ENCODE measurements at regions of chr17 and their contacts with region 1.

Region 1: DNA sequence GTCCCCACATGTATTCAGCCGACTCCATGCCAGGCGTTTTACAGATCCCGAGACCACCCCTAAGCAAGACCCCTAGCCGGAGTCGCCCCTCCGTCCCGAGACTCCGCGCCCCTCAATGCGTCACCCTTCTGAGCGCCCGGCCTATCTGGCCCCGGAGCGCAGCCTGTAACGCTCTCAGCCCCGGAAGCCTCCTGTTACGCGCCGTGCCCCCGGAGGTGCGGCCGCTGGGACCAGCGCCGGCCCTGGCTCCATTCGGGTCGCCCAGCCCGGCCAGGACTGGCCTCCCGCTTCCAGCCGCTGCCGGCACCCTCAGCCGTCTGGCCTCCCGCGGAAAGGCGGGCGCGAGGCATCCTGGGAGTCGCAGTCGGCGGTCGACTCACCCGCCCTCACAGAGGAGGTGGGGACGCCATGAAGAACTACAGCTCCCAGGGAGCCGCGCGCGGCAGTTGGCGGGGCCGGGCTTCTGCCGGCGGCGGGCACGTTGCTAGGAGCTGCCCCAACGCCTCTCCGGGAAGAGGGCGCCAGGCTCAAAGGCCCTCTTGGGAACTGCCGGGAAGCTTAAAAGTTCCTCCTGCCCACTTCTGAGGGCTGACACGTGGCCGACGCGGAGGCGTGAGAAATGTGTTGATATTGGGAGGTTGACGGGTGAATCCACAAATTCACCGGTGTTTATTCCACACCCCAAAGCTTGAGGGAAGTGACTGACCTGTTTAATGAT is at the start of gene FBF1:
- H3K4me3 ChIP-seq: peak within 1 kb of the TSS; percentile 92
- H3K27ac ChIP-seq: peak within 1 kb of the TSS; percentile 85
- H3K4me1 ChIP-seq: peaks cover 3% of the 10 kb centered on the region; the same call in 1 of the 2 replicates
- CTCF ChIP-seq: peak; percentile 52; the same call in 1 of the 2 replicates

Region 2: DNA sequence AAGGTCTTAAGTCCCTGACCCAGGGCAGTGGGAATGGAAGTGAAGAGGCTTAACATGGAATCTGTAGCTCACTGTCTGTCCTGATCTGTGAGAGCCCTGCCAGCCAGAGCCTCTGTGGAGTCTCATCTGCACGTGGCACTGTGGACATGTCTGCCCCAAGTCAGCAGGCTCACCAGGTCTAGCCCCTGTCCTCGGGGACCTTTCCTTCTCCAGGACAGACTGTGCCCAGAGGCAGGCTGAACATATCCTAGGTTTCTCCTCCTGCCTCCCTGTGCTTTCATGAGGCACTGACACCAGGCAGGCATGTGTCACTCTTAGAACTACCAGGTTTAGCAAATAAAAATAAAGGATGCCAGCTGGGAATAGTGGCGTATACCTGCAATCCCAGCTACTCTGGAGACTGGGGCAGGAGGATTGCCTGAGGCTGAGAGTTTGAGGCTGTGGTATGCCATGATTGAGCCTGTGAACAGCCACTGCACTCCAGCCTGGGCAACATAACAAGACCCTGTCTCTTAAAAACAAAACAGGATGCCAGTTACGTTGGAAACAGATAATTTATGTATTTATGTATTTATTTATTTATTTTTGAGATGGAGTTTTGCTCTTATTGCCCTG is 133.9 kb before region 1 on chr17:
- CTCF ChIA-PET with region 1: no interaction called
- POLR2A ChIA-PET with region 1: no interaction called
- H3K4me3 ChIP-seq: no peak overlapping the region
- H3K27ac ChIP-seq: peak overlapping the region; percentile 46; the same call in 1 of the 2 replicates
- H3K4me1 ChIP-seq: peaks cover 9% of the 10 kb centered on the region
- CTCF ChIP-seq: no peak

Region 3: GRCh38 chr17:75904749-75905521 is 35.9 kb before region 1 on chr17 and contains the start of gene MRPL38:
- CTCF ChIA-PET with region 1: no interaction called
- POLR2A ChIA-PET with region 1: interaction called, 10 read pairs
- H3K4me3 ChIP-seq: peak within 1 kb of the TSS; percentile 92
- H3K27ac ChIP-seq: peak within 1 kb of the TSS; percentile 87
- H3K4me1 ChIP-seq: peaks cover 8% of the 10 kb centered on the region
- CTCF ChIP-seq: peak; percentile 99

Region 4: GRCh38 chr17:75927286-75927922 is 13.5 kb before region 1 on chr17:
- CTCF ChIA-PET with region 1: interaction called, 15 read pairs
- POLR2A ChIA-PET with region 1: interaction called, 20 read pairs
- H3K4me3 ChIP-seq: no peak overlapping the region
- H3K27ac ChIP-seq: no peak overlapping the region
- H3K4me1 ChIP-seq: no peaks in the 10 kb centered on the region
- CTCF ChIP-seq: peak; percentile 15; the same call in 1 of the 2 replicates

Region 5: DNA sequence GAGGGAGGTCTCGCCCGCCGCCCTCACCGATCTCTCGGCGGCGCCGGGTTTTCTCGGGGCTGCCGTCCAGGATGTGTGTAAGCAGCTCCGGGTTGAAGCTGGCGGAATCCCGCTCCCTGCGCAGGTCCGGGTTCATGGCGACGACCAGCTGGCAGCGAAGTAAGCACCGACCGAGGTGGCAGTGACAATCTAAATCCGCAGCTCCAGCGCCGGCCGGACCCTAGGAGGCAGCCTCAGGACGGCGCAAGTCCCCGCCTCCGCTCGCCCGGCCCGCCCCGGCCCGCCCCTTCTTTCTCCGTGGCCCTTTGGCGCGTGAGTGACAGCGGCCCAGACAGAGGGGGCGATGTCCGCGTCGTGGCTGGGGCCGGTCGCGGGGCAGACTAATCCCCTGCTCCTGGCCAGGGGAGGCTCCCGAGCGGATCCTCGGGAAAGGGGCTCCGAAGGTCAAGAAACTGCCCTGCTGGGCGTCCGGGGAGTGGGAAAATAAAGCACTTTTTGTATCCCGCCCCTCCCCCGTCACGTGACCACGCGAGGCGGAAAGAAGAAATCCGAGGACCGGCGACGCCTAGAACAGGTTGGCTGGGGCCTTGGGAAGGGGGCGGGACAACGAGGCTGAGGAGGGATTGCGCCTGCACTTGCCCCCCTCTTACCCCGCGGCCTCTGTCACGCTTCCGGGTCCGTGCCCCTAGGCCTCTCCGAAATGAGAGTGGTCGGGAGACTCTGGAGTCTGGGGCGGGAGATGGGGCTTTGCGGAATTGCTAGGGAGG is 38.2 kb after region 1 on chr17 and contains the starts of genes ACOX1 and TEN1:
- CTCF ChIA-PET with region 1: no interaction called
- POLR2A ChIA-PET with region 1: interaction called, 17 read pairs
- H3K4me3 ChIP-seq: peak within 1 kb of the TSS; percentile 77
- H3K27ac ChIP-seq: peak within 1 kb of the TSS; percentile 96
- H3K4me1 ChIP-seq: peaks cover 24% of the 10 kb centered on the region
- CTCF ChIP-seq: peak; percentile 83

Measured in HEK293 (cell line).